T-cell (primary cell): ENCODE measurements at regions of chr5 and their contacts with region 1.

Region 1: GRCh38 chr5:74685981-74686510 is 1.0 kb downstream of the HEXB start:
- DNase-seq: peak in 6 of 35 experiments; percentile 1 to 29 (median 12)
- ATAC-seq: no peak
- H3K4me3 ChIP-seq: peak overlapping the region; percentile 94
- H3K4me3 Mint-ChIP-seq: peak overlapping the region; percentile 73 to 88 (median 82)
- H3K27ac ChIP-seq: peak overlapping the region; percentile 57
- H3K27ac Mint-ChIP-seq: peak overlapping the region; percentile 74 to 87
- H3K4me1 ChIP-seq: peaks cover 2 to 21% of the 10 kb centered on the region in 2 experiments
- H3K4me1 Mint-ChIP-seq: peaks cover 24 to 31% (median 26%) of the 10 kb centered on the region in 3 donors
- H3K27me3 ChIP-seq: no peaks in the 10 kb centered on the region
- H3K27me3 Mint-ChIP-seq: no peaks in the 10 kb centered on the region

Region 2: GRCh38 chr5:73417303-73418034 is 1268.6 kb before region 1 on chr5:
- CTCF ChIA-PET with region 1: no interaction called
- POLR2A ChIA-PET with region 1: no interaction called
- DNase-seq: no peak
- ATAC-seq: no peak
- H3K4me3 ChIP-seq: no peak overlapping the region
- H3K4me3 Mint-ChIP-seq: no peak overlapping the region
- H3K27ac ChIP-seq: no peak overlapping the region
- H3K27ac Mint-ChIP-seq: no peak overlapping the region
- H3K4me1 ChIP-seq: peaks cover 0 to 15% of the 10 kb centered on the region in 2 experiments
- H3K4me1 Mint-ChIP-seq: peaks cover 0 to 19% (median 16%) of the 10 kb centered on the region in 3 donors
- H3K27me3 ChIP-seq: peaks cover 38 to 52% of the 10 kb centered on the region in 2 experiments
- H3K27me3 Mint-ChIP-seq: peaks cover 74 to 87% of the 10 kb centered on the region in 2 donors

Region 3: GRCh38 chr5:74665816-74666215 is 20.2 kb before region 1 on chr5:
- CTCF ChIA-PET with region 1: no interaction called
- POLR2A ChIA-PET with region 1: no interaction called
- DNase-seq: no peak
- ATAC-seq: no peak
- H3K4me3 ChIP-seq: no peak overlapping the region
- H3K4me3 Mint-ChIP-seq: no peak overlapping the region
- H3K27ac ChIP-seq: no peak overlapping the region
- H3K27ac Mint-ChIP-seq: no peak overlapping the region
- H3K4me1 ChIP-seq: no peaks in the 10 kb centered on the region
- H3K4me1 Mint-ChIP-seq: no peaks in the 10 kb centered on the region
- H3K27me3 ChIP-seq: peaks cover 0 to 13% of the 10 kb centered on the region in 2 experiments
- H3K27me3 Mint-ChIP-seq: peaks cover 5 to 12% of the 10 kb centered on the region in 2 donors

Region 4: GRCh38 chr5:75023368-75024159 is 337.5 kb after region 1 on chr5:
- CTCF ChIA-PET with region 1: no interaction called
- POLR2A ChIA-PET with region 1: no interaction called
- DNase-seq: peak in 28 of 35 experiments; percentile 6 to 64 (median 24)
- ATAC-seq: peak; percentile 75 to 85 (median 81)
- H3K4me3 ChIP-seq: no peak overlapping the region
- H3K4me3 Mint-ChIP-seq: peak overlapping the region; percentile 34 to 43 (median 42)
- H3K27ac ChIP-seq: peak overlapping the region; percentile 33
- H3K27ac Mint-ChIP-seq: peak overlapping the region; percentile 83 to 92
- H3K4me1 ChIP-seq: peaks cover 11 to 18% of the 10 kb centered on the region in 2 experiments
- H3K4me1 Mint-ChIP-seq: peaks cover 39 to 58% (median 47%) of the 10 kb centered on the region in 3 donors
- H3K27me3 ChIP-seq: no peaks in the 10 kb centered on the region
- H3K27me3 Mint-ChIP-seq: peaks cover 0 to 3% of the 10 kb centered on the region in 2 donors

Region 5: GRCh38 chr5:75331095-75332090 is 645.3 kb after region 1 on chr5:
- CTCF ChIA-PET with region 1: no interaction called
- POLR2A ChIA-PET with region 1: interaction called in 1 of 2 experiments, 15 read pairs
- DNase-seq: no peak
- ATAC-seq: no peak
- H3K4me3 ChIP-seq: no peak overlapping the region
- H3K4me3 Mint-ChIP-seq: no peak overlapping the region
- H3K27ac ChIP-seq: no peak overlapping the region
- H3K27ac Mint-ChIP-seq: no peak overlapping the region
- H3K4me1 ChIP-seq: peaks cover 0 to 4% of the 10 kb centered on the region in 2 experiments
- H3K4me1 Mint-ChIP-seq: no peaks in the 10 kb centered on the region
- H3K27me3 ChIP-seq: peaks cover 0 to 3% of the 10 kb centered on the region in 2 experiments
- H3K27me3 Mint-ChIP-seq: no peaks in the 10 kb centered on the region